ENCODE measurements at regions of chr5 and their contacts with region 1.

Region 1: GRCh38 chr5:74673011-74673790 is 11.8 kb upstream of the HEXB start:
- DNase-seq: no peak
- CTCF ChIP-seq: no peak

Region 2: DNA sequence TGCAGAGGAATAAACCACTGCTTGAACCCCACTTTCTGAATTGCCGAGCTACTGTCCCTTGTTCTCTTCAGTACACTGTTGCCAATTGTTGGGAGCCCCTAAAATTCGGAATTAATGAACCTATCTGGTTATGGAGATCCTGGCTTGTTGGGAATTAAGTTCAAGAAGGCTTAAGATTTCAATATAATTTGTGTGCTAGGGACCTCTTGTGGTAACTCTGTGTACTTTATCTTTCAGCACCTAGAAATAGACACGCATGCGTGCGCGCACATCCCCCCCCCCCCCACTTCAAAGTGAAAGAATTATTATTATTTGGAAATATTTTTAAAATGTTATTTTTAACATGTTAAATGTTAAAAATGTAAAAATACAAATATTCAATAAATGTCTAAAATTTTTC is 246.3 kb after region 1 on chr5:
- in situ Hi-C with region 1: loop called (anchors 10 kb)
- DNase-seq: peak; percentile 61
- CTCF ChIP-seq: peak; percentile 24

Region 3: GRCh38 chr5:75023368-75024159 is 350.4 kb after region 1 on chr5:
- in situ Hi-C with region 1: no loop called
- DNase-seq: no peak
- CTCF ChIP-seq: no peak

Measured in GM13976 (cell line).